ENCODE measurements at regions of chr12 and their contacts with region 1.

Region 1: GRCh38 chr12:121550974-121551634 is 29.7 kb downstream of the KDM2B start:
- DNase-seq: no peak
- H3K4me3 ChIP-seq: no peak overlapping the region
- H3K27ac ChIP-seq: no peak overlapping the region
- H3K4me1 ChIP-seq: no peaks in the 10 kb centered on the region
- H3K27me3 ChIP-seq: no peaks in the 10 kb centered on the region
- CTCF ChIP-seq: no peak
- POLR2A ChIP-seq: no peak

Region 2: DNA sequence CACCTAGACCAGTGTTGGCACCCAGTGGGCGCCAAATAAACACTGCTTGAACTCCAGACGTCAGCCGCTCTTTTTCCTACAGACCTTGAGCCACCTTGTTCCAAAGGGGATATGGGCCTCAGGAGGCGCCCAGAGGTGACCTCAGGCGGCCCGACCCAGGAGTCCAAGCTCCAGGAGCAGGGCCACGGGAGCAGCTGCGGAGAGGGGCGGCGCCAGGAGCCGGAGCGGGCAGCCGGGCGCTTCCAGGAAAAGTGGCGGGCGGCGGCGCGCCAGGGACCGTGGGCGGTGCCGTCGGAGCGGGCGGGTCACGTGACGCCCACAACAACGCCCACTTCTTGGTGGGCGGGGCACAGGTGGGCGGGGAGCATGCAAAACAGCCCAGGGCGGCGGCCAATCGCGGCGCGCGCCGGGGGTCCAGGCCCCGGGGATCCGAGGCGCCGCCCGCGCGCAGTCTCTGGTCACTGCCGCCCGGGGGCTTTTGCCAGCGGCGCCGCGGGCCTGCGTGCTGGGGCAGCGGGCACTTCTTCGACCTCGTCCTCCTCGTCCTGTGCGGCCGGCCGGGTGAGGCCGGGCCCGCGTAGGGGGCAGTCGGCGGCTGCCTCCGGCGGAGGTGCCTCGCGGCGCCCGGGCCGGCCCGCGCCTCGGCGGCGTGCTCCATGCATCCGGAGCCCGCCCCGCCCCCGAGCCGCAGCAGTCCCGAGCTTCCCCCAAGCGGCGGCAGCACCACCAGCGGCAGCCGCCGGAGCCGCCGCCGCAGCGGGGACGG is 75.2 kb after region 1 on chr12 and contains the start of gene ORAI1:
- intact Hi-C with region 1: loop called (anchors 10 kb)
- DNase-seq: peak; percentile 96
- H3K4me3 ChIP-seq: peak within 1 kb of the TSS; percentile 59 to 79
- H3K27ac ChIP-seq: peak within 1 kb of the TSS; percentile 91
- H3K4me1 ChIP-seq: no peaks in the 10 kb centered on the region
- H3K27me3 ChIP-seq: no peaks in the 10 kb centered on the region
- CTCF ChIP-seq: peak in 3 of 4 experiments; percentile 44 to 55 (median 51)
- POLR2A ChIP-seq: peak; percentile 89
- total RNA-seq, gene ORAI1: 1.8 to 20.0 (median 13.8) TPM

Region 3: DNA sequence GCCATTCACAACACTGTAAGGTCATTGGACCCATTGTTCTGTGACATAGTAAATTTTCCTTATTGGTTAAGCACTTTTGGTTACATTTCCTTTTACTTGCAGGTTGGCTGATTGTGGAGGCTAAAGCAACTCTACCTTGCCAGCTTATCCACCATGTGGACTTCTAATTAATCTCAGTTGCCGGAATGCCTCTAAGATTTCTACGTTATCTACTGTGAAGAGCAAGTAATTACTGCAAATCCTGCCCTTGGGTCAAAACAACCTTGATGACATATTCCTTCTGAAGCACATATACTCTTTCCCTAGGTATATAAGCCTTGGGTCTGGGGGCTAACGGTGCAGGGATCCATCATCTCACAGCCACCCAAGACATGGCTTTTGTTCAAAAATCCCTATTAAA is 137.9 kb after region 1 on chr12:
- intact Hi-C with region 1: loop called (anchors 10 kb)
- DNase-seq: no peak
- H3K4me3 ChIP-seq: no peak overlapping the region
- H3K27ac ChIP-seq: no peak overlapping the region
- H3K4me1 ChIP-seq: no peaks in the 10 kb centered on the region
- H3K27me3 ChIP-seq: no peaks in the 10 kb centered on the region
- CTCF ChIP-seq: no peak
- POLR2A ChIP-seq: no peak

Measured in uterus (tissue), 4 donors.